ENCODE measurements at regions of chr11 and their contacts with region 1.

Region 1: GRCh38 chr11:12331239-12331874 is 46.0 kb upstream of the PARVA start:
- DNase-seq: peak; percentile 86
- ATAC-seq: no peak
- H3K4me3 Mint-ChIP-seq: no peak overlapping the region
- H3K27ac Mint-ChIP-seq: no peak overlapping the region
- H3K4me1 Mint-ChIP-seq: peaks cover 3% of the 10 kb centered on the region
- H3K27me3 Mint-ChIP-seq: no peaks in the 10 kb centered on the region
- CTCF ChIP-seq: peak; percentile 86

Region 2: GRCh38 chr11:12008790-12009616 is 322.4 kb before region 1 on chr11:
- CTCF ChIA-PET with region 1: no interaction called
- POLR2A ChIA-PET with region 1: no interaction called
- intact Hi-C with region 1: no loop called
- DNase-seq: no peak
- ATAC-seq: no peak
- H3K4me3 Mint-ChIP-seq: peak overlapping the region; percentile 55
- H3K27ac Mint-ChIP-seq: no peak overlapping the region
- H3K4me1 Mint-ChIP-seq: peaks cover 8% of the 10 kb centered on the region
- H3K27me3 Mint-ChIP-seq: peaks cover 70% of the 10 kb centered on the region
- CTCF ChIP-seq: no peak

Region 3: GRCh38 chr11:12269104-12269441 is 62.3 kb before region 1 on chr11:
- CTCF ChIA-PET with region 1: no interaction called
- POLR2A ChIA-PET with region 1: no interaction called
- intact Hi-C with region 1: no loop called
- DNase-seq: no peak
- ATAC-seq: no peak
- H3K4me3 Mint-ChIP-seq: no peak overlapping the region
- H3K27ac Mint-ChIP-seq: no peak overlapping the region
- H3K4me1 Mint-ChIP-seq: no peaks in the 10 kb centered on the region
- H3K27me3 Mint-ChIP-seq: no peaks in the 10 kb centered on the region
- CTCF ChIP-seq: no peak

Region 4: DNA sequence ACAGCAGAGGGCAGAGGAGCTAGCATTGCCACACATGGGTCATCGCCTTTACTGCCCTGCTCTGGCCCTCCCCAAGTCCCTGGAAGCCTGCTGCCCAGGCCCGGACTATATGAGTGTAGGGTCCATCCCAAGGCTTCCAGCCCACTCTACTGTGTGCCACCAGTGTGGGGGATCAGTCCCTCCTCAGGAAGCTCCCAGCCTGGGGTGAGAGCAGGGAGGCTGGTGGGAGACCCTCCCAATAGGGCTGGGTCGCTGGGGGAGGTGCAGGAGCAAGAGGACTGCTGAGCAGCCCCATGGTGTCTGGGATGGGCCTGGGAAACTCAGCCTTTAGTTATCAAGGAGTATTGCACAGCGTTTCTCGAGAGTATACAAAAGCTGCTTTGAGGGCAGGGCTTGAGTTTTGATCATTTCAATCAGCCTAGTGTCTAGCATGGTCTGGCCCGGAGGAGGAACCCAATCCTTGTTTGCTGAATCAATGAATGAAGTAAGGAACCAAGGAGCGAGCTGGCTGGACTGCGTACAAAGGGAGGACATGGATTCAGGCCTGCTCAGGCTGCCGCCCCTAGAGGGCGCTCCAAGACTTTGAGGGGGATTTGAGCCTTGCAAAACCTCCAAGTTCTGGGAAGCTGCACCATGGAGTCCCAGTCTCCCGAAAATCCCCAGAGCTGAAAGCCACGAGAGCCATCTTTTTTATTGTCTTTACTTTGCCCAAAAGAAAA is 43.0 kb before region 1 on chr11:
- CTCF ChIA-PET with region 1: interaction called, 10 read pairs
- POLR2A ChIA-PET with region 1: no interaction called
- intact Hi-C with region 1: no loop called
- DNase-seq: peak; percentile 69
- ATAC-seq: peak; percentile 58
- H3K4me3 Mint-ChIP-seq: no peak overlapping the region
- H3K27ac Mint-ChIP-seq: no peak overlapping the region
- H3K4me1 Mint-ChIP-seq: peaks cover 4% of the 10 kb centered on the region
- H3K27me3 Mint-ChIP-seq: no peaks in the 10 kb centered on the region
- CTCF ChIP-seq: peak; percentile 90

Region 5: DNA sequence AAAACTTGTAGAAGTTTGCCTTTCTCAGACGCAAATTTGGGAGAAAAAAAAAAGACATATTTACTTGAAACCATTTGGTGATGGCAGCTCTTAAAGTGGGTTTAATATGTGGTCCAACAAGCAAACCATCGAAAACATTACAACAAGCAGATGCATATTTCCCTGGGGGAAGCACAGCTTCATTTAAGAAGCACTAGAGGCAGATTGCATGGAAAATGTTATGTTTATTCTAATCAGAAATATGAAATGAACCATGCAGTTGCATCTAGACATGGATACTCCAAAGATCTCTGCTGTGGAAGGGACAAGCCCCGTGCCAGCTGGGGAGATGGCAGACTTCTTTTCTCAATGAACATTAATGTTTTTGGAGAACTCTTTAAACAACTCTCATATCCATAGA is 11.4 kb before region 1 on chr11:
- CTCF ChIA-PET with region 1: interaction called, 19 read pairs
- POLR2A ChIA-PET with region 1: no interaction called
- intact Hi-C with region 1: no loop called
- DNase-seq: no peak
- ATAC-seq: no peak
- H3K4me3 Mint-ChIP-seq: no peak overlapping the region
- H3K27ac Mint-ChIP-seq: no peak overlapping the region
- H3K4me1 Mint-ChIP-seq: peaks cover 9% of the 10 kb centered on the region
- H3K27me3 Mint-ChIP-seq: peaks cover 1% of the 10 kb centered on the region
- CTCF ChIP-seq: no peak

Region 6: GRCh38 chr11:12411806-12412727 is 80.7 kb after region 1 on chr11:
- CTCF ChIA-PET with region 1: interaction called, 12 read pairs
- POLR2A ChIA-PET with region 1: no interaction called
- intact Hi-C with region 1: loop called (anchors 10 kb)
- DNase-seq: peak; percentile 62
- ATAC-seq: peak; percentile 69
- H3K4me3 Mint-ChIP-seq: no peak overlapping the region
- H3K27ac Mint-ChIP-seq: no peak overlapping the region
- H3K4me1 Mint-ChIP-seq: no peaks in the 10 kb centered on the region
- H3K27me3 Mint-ChIP-seq: peaks cover 4% of the 10 kb centered on the region
- CTCF ChIP-seq: peak; percentile 72

Region 7: GRCh38 chr11:12587333-12587991 is 256.1 kb after region 1 on chr11:
- CTCF ChIA-PET with region 1: interaction called, 10 read pairs
- POLR2A ChIA-PET with region 1: no interaction called
- intact Hi-C with region 1: no loop called
- DNase-seq: no peak
- ATAC-seq: no peak
- H3K4me3 Mint-ChIP-seq: no peak overlapping the region
- H3K27ac Mint-ChIP-seq: no peak overlapping the region
- H3K4me1 Mint-ChIP-seq: no peaks in the 10 kb centered on the region
- H3K27me3 Mint-ChIP-seq: peaks cover 3% of the 10 kb centered on the region
- CTCF ChIP-seq: no peak

Region 8: GRCh38 chr11:12888525-12889158 is 557.3 kb after region 1 on chr11:
- CTCF ChIA-PET with region 1: interaction called, 120 read pairs
- POLR2A ChIA-PET with region 1: interaction called, 3 read pairs
- intact Hi-C with region 1: loop called (anchors 2 kb)
- DNase-seq: peak; percentile 88
- ATAC-seq: peak; percentile 47
- H3K4me3 Mint-ChIP-seq: no peak overlapping the region
- H3K27ac Mint-ChIP-seq: no peak overlapping the region
- H3K4me1 Mint-ChIP-seq: no peaks in the 10 kb centered on the region
- H3K27me3 Mint-ChIP-seq: peaks cover 4% of the 10 kb centered on the region
- CTCF ChIP-seq: peak; percentile 83

Region 9: DNA sequence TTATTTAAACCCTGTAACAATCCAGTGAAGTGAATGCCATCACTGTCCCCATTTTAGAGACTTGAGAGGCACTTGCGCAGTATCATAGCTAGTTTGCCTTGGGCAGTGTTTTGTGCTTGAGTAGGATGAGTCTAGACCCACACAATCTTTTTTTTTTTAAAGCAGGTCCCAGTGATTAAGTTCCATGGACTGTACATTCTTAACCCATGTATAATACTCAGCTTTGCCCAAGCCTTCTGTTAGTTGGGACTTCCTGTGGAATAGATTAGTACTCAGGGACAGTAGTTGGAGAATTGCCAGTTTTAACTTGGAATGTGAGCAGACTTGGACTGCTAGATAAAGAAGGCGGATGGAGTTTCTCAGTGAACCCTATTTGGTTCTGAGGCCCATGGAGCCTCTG is 569.1 kb after region 1 on chr11:
- CTCF ChIA-PET with region 1: interaction called, 22 read pairs
- POLR2A ChIA-PET with region 1: no interaction called
- intact Hi-C with region 1: no loop called
- DNase-seq: no peak
- ATAC-seq: no peak
- H3K4me3 Mint-ChIP-seq: no peak overlapping the region
- H3K27ac Mint-ChIP-seq: no peak overlapping the region
- H3K4me1 Mint-ChIP-seq: no peaks in the 10 kb centered on the region
- H3K27me3 Mint-ChIP-seq: peaks cover 18% of the 10 kb centered on the region
- CTCF ChIP-seq: no peak

Region 10: DNA sequence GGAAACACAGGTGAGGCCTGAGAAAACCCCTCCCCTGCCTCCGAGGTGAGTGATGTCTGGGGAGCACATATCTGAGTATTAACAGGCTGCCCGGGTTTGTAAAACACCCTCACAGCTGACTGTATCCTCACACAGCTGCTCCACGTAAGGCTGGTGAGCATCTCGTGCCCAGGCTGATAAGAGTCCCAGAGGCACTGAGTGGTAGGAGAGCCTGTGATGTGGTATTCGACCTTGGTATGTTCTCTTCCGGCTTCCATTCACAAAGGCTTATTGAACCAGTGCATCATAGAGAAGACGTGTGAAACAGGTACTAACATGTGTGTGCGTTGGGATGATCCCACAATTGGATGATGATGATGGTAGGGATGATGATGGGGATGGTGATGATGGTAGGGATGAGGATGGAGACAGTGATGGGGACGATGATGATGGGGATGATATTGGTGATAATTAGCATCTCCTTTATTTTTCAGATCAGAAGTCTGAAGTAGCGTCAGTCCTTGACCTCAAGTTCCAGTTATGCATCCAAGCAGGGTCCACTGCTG is 749.6 kb after region 1 on chr11:
- CTCF ChIA-PET with region 1: no interaction called
- POLR2A ChIA-PET with region 1: no interaction called
- intact Hi-C with region 1: no loop called
- DNase-seq: no peak
- ATAC-seq: no peak
- H3K4me3 Mint-ChIP-seq: no peak overlapping the region
- H3K27ac Mint-ChIP-seq: no peak overlapping the region
- H3K4me1 Mint-ChIP-seq: no peaks in the 10 kb centered on the region
- H3K27me3 Mint-ChIP-seq: peaks cover 13% of the 10 kb centered on the region
- CTCF ChIP-seq: no peak

Measured in activated CD8-positive, alpha-beta T cell treated with anti-CD3 and anti-CD28 coated beads for 36 hours (primary cell).